A549 (cell line): ENCODE measurements at regions of chr19 and their contacts with region 1.

Region 1: GRCh38 chr19:55503502-55504251 is 15.4 kb downstream of the SSC5D start:
- DNase-seq: peak; percentile 95 to 96
- ATAC-seq: peak; percentile 82 to 92
- H3K4me3 ChIP-seq: peak overlapping the region; percentile 31
- H3K27ac ChIP-seq: peak overlapping the region; percentile 50 to 75; a peak in 4 of 6 replicates
- H3K4me1 ChIP-seq: no peaks in the 10 kb centered on the region
- CTCF ChIP-seq: peak; percentile 95
- EP300 ChIP-seq: no peak
- POLR2A ChIP-seq: no peak
- RAD21 ChIP-seq: peak; percentile 93 to 94

Region 2: DNA sequence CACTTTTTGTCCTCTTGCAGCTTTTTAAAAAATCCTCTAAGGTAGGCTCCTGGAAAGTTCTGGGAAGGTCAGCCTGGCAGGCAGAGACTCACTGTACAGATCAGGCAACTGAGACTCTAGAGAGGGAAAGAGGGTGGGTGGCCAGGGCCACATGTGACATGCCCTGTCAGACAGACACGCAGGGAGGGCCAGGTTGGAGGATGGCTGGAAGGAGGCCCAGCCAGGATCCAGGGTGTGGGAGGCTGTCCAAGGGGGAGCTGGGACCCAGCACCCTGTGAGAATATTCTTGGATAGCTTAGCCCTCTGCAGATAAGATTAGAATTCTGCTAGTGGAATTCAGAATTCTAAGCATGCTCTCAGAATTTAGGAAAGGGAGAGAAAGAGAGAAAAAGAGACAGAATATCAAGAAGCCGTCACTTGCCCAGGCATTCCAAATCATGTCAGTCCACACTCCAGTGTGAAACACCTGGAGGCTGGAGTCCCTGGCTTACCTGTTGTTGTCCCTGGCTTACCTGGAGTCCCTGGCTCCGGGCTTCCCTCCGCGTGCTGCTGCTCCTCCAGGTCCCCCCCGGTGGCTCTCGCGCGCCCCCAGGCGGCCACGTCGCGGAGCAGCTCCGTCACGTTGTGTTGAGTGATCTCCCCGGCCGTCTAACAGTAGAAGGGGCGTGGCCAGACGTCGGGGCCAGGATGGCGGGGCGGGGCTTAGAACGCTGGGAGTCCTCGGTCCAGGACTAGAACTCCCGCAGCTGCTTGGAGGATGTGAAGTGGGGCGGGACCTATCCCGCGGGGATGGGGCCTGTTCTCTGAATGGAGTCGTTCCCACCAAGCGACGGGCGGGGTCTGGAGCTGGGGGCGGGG is 343.3 kb before region 1 on chr19:
- CTCF ChIA-PET with region 1: interaction called, 13 read pairs
- POLR2A ChIA-PET with region 1: no interaction called
- DNase-seq: peak; percentile 95 to 98
- ATAC-seq: peak; percentile 66 to 85
- H3K4me3 ChIP-seq: 0 out of 3 replicates have a peak overlapping the region, but pooled peaks have one; percentile 10
- H3K27ac ChIP-seq: peak overlapping the region in 1 of 2 experiments; percentile 69; a peak in 3 of 6 replicates
- H3K4me1 ChIP-seq: peaks cover 22% of the 10 kb centered on the region
- CTCF ChIP-seq: peak; percentile 98
- EP300 ChIP-seq: no peak
- POLR2A ChIP-seq: no peak
- RAD21 ChIP-seq: peak; percentile 90

Region 3: DNA sequence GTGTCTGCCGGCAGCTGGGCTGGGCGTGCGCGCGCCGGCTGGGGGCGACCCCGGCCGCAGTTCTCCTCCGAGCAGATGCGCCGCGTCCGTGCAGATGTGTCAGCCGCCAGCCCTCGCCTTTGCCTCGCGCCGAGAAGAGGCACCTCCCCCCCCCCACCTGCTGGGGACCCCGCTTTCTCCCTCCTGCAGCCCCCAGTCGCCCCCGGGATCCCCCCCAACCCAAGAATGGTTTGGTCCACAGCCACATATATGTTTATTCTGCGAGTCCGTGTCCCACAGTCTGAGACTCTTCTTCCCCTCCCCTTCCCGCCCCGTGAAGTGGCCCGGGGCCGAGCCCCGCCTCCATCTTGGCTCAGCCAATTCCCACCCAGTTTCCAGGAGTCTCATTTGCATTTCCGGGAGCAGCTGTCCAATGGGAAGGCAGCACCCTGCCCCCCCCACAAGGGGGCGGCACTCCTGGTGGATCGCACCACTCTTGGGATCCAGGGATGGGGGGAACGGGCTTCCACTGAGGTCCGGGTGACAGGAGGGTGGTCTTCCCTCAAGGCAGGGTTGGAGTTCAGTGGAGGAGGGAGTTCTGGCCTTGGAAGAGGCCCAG is 50.8 kb before region 1 on chr19:
- CTCF ChIA-PET with region 1: interaction called, 16 read pairs
- POLR2A ChIA-PET with region 1: no interaction called
- DNase-seq: peak; percentile 66 to 80
- ATAC-seq: peak in 1 of 2 experiments; percentile 63; a peak in 3 of 6 replicates
- H3K4me3 ChIP-seq: no peak overlapping the region
- H3K27ac ChIP-seq: no peak overlapping the region
- H3K4me1 ChIP-seq: peaks cover 31% of the 10 kb centered on the region
- CTCF ChIP-seq: no peak
- EP300 ChIP-seq: no peak
- POLR2A ChIP-seq: no peak
- RAD21 ChIP-seq: no peak

Region 4: GRCh38 chr19:55476100-55476775 is 27.4 kb before region 1 on chr19 and contains the start of gene ZNF628:
- CTCF ChIA-PET with region 1: interaction called, 219 read pairs
- POLR2A ChIA-PET with region 1: interaction called, 9 read pairs
- DNase-seq: peak; percentile 99 to 100
- ATAC-seq: peak; percentile 94
- H3K4me3 ChIP-seq: peak within 1 kb of the TSS; percentile 56
- H3K27ac ChIP-seq: peak within 1 kb of the TSS; percentile 84 to 92
- H3K4me1 ChIP-seq: peaks cover 26% of the 10 kb centered on the region
- CTCF ChIP-seq: no peak
- EP300 ChIP-seq: no peak
- POLR2A ChIP-seq: peak; percentile 26; the same call in 1 of the 2 replicates
- RAD21 ChIP-seq: no peak
- polyA plus RNA-seq, gene ZNF628: 0.32 and 0.48 TPM in 2 replicates

Region 5: DNA sequence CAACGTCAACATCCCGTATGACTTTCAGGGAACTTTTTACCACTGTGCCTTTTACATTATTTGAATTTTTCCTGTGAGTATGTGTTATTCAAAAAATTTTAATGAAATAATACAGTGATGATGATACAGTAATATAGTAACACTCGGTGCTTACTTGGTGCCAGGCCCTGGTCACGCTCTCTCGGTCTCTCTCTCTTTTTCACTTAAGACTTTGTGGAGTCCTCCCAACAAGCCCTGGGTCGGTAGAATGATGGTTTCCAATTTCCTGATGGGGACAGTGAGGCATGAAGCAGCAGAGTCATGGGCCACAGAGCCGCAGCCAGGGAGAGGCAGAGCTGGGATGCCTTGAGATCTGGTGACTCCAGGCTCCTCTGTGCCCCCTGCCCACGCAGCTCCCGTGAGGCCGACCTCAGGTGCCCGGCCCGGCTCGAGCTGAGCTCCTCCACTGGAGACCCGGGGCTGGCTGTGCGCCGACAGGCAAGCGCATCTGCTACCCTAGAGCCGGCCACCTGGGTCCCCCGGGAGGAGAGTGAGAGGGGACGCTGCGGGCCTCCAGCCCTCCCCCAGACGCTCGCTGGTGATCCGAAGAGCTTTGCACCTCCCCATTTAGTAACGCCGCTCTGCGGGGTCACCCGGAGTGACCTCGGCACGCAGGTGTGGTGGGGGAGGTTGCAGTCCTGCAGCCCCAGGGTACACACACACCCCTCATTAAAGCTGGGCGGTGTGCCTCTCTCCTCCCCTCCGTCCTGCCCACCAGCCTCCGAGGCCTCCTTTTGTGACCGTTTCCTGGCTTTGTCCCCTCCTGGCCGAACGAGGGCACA is 46.0 kb after region 1 on chr19:
- CTCF ChIA-PET with region 1: interaction called, 10 read pairs
- POLR2A ChIA-PET with region 1: interaction called, 3 read pairs
- DNase-seq: peak; percentile 88
- ATAC-seq: peak; percentile 74 to 75
- H3K4me3 ChIP-seq: peak overlapping the region; percentile 38
- H3K27ac ChIP-seq: peak overlapping the region; percentile 97 to 99
- H3K4me1 ChIP-seq: peaks cover 76% of the 10 kb centered on the region
- CTCF ChIP-seq: no peak; the same call in 2 of the 3 replicates
- EP300 ChIP-seq: no peak
- POLR2A ChIP-seq: peak; percentile 33; the same call in 1 of the 2 replicates
- RAD21 ChIP-seq: peak; percentile 41 to 42; a peak in 2 of 5 replicates